CD8-positive, alpha-beta T cell (primary cell): ENCODE measurements at regions of chr22 and their contacts with region 1.

Region 1: DNA sequence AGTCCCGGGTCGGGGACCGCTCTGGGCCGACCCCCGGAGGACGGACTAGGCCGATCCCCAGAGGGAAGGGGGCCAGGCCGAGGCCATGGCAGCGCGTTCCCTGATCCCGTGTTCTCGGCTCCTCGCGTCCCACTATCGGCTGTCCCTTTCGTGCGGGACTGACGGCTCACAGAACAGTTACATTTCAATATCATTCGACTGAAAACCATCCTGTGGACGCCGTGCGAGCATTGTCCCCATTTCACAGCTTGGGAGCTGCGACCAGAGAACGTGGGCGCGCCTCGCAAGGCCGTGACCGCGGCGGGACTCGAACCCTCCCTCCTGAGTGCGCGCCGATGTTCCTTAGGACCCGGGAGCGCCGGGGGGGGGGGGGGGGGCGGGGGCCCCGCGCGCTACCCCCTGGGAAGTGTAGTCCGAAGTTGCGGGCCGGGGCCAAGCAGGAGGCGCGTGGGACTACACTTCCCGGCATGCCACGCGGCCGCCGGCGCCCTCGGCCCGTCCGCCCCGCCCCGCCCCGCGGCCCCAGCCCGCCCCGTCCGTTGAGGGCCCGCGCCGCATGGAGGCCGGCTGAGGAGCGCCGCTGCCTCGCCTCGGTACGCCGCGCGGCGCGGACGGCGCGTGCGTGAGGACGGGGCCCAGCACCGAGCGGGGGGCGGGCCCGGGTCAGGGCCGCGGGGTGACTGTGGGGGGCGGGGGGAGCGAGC is at the start of gene TRABD:
- DNase-seq: peak; percentile 79 to 95 (median 87)
- ATAC-seq: peak; percentile 69
- H3K4me3 ChIP-seq: peak within 1 kb of the TSS; percentile 58 to 70
- H3K4me3 Mint-ChIP-seq: peak within 1 kb of the TSS; percentile 93
- H3K27ac ChIP-seq: peak within 1 kb of the TSS; percentile 45 to 71
- H3K27ac Mint-ChIP-seq: peak within 1 kb of the TSS; percentile 93
- H3K4me1 ChIP-seq: peaks cover 40% of the 10 kb centered on the region
- H3K4me1 Mint-ChIP-seq: peaks cover 32% of the 10 kb centered on the region
- H3K27me3 ChIP-seq: no peaks in the 10 kb centered on the region
- H3K27me3 Mint-ChIP-seq: peaks cover 2% of the 10 kb centered on the region
- CTCF ChIP-seq: no peak
- total RNA-seq, gene TRABD: 178 to 187 TPM

Region 2: GRCh38 chr22:49936018-49936952 is 249.3 kb before region 1 on chr22:
- CTCF ChIA-PET with region 1: no interaction called
- POLR2A ChIA-PET with region 1: no interaction called
- intact Hi-C with region 1: loop called in 1 of 2 experiments (anchors 10 kb)
- DNase-seq: peak; percentile 80 to 96 (median 92)
- ATAC-seq: peak; percentile 79
- H3K4me3 ChIP-seq: peak overlapping the region; percentile 43 to 47
- H3K4me3 Mint-ChIP-seq: peak overlapping the region; percentile 67
- H3K27ac ChIP-seq: peak overlapping the region; percentile 56 to 82
- H3K27ac Mint-ChIP-seq: peak overlapping the region; percentile 85
- H3K4me1 ChIP-seq: peaks cover 26% of the 10 kb centered on the region
- H3K4me1 Mint-ChIP-seq: peaks cover 16% of the 10 kb centered on the region
- H3K27me3 ChIP-seq: no peaks in the 10 kb centered on the region
- H3K27me3 Mint-ChIP-seq: no peaks in the 10 kb centered on the region
- CTCF ChIP-seq: no peak

Region 3: GRCh38 chr22:49970528-49971231 is 214.9 kb before region 1 on chr22:
- CTCF ChIA-PET with region 1: no interaction called
- POLR2A ChIA-PET with region 1: no interaction called
- intact Hi-C with region 1: loop called in 1 of 2 experiments (anchors 2 kb)
- DNase-seq: peak; percentile 85 to 98 (median 94)
- ATAC-seq: peak; percentile 86
- H3K4me3 ChIP-seq: peak overlapping the region; percentile 34 to 55
- H3K4me3 Mint-ChIP-seq: peak overlapping the region; percentile 75
- H3K27ac ChIP-seq: peak overlapping the region; percentile 50 to 77
- H3K27ac Mint-ChIP-seq: peak overlapping the region; percentile 93
- H3K4me1 ChIP-seq: peaks cover 26% of the 10 kb centered on the region
- H3K4me1 Mint-ChIP-seq: peaks cover 24% of the 10 kb centered on the region
- H3K27me3 ChIP-seq: no peaks in the 10 kb centered on the region
- H3K27me3 Mint-ChIP-seq: no peaks in the 10 kb centered on the region
- CTCF ChIP-seq: no peak

Region 4: DNA sequence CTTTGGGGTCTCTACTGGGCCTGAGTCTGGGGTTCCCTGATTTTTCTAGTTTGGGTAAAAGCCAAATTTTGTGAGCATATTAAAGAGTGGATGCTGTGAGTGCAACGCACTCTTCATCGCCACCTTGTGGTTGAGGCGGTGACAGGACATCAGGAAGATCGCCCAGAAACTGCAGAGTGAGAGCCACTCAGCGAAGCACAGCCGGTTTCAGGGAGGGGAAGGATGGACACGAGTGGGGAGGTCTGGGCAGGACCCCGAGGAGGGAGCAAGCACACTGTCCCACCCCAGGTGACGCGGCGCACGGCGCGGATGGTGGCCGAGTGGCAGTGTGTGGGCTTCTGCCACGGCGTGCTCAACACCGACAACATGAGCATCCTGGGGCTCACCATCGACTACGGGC is 24.4 kb after region 1 on chr22:
- CTCF ChIA-PET with region 1: interaction called, 9 read pairs
- POLR2A ChIA-PET with region 1: interaction called, 9 read pairs
- intact Hi-C with region 1: loop called in 1 of 2 experiments (anchors 2 kb)
- DNase-seq: peak; percentile 49 to 84 (median 72)
- ATAC-seq: peak; percentile 86
- H3K4me3 ChIP-seq: no peak overlapping the region
- H3K4me3 Mint-ChIP-seq: no peak overlapping the region
- H3K27ac ChIP-seq: no peak overlapping the region
- H3K27ac Mint-ChIP-seq: peak overlapping the region; percentile 88
- H3K4me1 ChIP-seq: peaks cover 7% of the 10 kb centered on the region
- H3K4me1 Mint-ChIP-seq: peaks cover 33% of the 10 kb centered on the region
- H3K27me3 ChIP-seq: no peaks in the 10 kb centered on the region
- H3K27me3 Mint-ChIP-seq: no peaks in the 10 kb centered on the region
- CTCF ChIP-seq: peak; percentile 85

Region 5: GRCh38 chr22:50250555-50251476 is 65.3 kb after region 1 on chr22 and contains the start of gene HDAC10:
- CTCF ChIA-PET with region 1: no interaction called
- POLR2A ChIA-PET with region 1: interaction called, 8 read pairs
- intact Hi-C with region 1: loop called in 1 of 2 experiments (anchors 2 kb)
- DNase-seq: peak; percentile 38 to 90 (median 77)
- ATAC-seq: peak; percentile 72
- H3K4me3 ChIP-seq: peak within 1 kb of the TSS; percentile 77 to 89
- H3K4me3 Mint-ChIP-seq: peak within 1 kb of the TSS; percentile 81
- H3K27ac ChIP-seq: peak within 1 kb of the TSS; percentile 58 to 67
- H3K27ac Mint-ChIP-seq: no peak within 1 kb of the TSS
- H3K4me1 ChIP-seq: peaks cover 36% of the 10 kb centered on the region
- H3K4me1 Mint-ChIP-seq: peaks cover 22% of the 10 kb centered on the region
- H3K27me3 ChIP-seq: no peaks in the 10 kb centered on the region
- H3K27me3 Mint-ChIP-seq: no peaks in the 10 kb centered on the region
- CTCF ChIP-seq: no peak
- total RNA-seq, gene HDAC10: 81.8 to 82.6 TPM

Region 6: GRCh38 chr22:50582562-50583293 is 397.2 kb after region 1 on chr22 and contains the start of gene CHKB:
- CTCF ChIA-PET with region 1: no interaction called
- POLR2A ChIA-PET with region 1: no interaction called
- intact Hi-C with region 1: loop called in 1 of 2 experiments (anchors 2 kb)
- DNase-seq: peak; percentile 95 to 99 (median 98)
- ATAC-seq: peak; percentile 94
- H3K4me3 ChIP-seq: peak within 1 kb of the TSS; percentile 77 to 78
- H3K4me3 Mint-ChIP-seq: peak within 1 kb of the TSS; percentile 93
- H3K27ac ChIP-seq: peak within 1 kb of the TSS; percentile 93 to 94
- H3K27ac Mint-ChIP-seq: peak within 1 kb of the TSS; percentile 97
- H3K4me1 ChIP-seq: peaks cover 16% of the 10 kb centered on the region
- H3K4me1 Mint-ChIP-seq: peaks cover 30% of the 10 kb centered on the region
- H3K27me3 ChIP-seq: no peaks in the 10 kb centered on the region
- H3K27me3 Mint-ChIP-seq: no peaks in the 10 kb centered on the region
- CTCF ChIP-seq: no peak
- total RNA-seq, gene CHKB: 112 to 115 TPM